OCI-LY7 (cell line): ENCODE measurements at regions of chr9 and their contacts with region 1.

Region 1: DNA sequence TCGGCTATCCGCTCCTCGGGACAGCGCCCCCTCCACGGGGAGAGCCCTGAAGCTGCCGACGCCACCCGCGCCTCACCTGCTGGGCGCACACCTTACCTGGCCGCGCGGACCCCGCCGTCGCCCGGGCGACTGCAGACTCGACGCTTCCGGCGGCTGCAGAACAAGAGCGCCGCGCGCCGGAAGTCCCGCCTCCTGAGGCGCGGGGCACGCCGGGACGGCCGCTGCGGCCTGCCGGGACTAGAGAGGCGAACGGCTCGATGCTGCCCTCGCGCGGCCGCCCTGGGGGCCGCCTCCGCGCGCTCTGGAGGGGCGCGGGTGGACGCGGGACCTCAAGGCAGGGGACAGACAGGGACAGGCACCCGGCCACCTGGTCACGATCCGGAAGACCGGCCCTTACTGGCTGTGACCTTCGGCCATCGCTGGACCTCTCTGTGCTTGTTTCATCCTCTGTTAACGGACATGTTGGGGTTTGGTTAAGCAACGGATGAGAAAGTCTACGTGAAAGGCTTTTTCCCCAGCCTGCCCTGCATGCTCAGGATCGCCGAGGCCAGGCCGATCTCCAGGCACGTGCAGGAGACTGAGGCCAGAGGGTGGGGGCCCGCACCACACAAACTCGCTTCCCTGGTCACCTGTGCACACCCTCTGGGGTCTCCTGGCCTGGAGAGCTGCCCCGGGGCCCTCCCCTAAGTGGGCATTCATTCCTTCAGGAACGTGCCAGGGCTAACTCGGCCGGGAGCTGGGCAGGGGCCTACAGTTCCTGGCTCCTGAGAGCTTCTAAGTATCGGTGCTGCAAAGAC is at the start of gene SNAPC4:
- DNase-seq: peak; percentile 93
- H3K4me3 ChIP-seq: peak within 1 kb of the TSS; percentile 99
- H3K27ac ChIP-seq: peak within 1 kb of the TSS; percentile 4
- H3K4me1 ChIP-seq: peaks cover 20% of the 10 kb centered on the region
- CTCF ChIP-seq: peak; percentile 85
- total RNA-seq, gene SNAPC4: 10.2 and 13.4 TPM in 2 replicates

Region 2: DNA sequence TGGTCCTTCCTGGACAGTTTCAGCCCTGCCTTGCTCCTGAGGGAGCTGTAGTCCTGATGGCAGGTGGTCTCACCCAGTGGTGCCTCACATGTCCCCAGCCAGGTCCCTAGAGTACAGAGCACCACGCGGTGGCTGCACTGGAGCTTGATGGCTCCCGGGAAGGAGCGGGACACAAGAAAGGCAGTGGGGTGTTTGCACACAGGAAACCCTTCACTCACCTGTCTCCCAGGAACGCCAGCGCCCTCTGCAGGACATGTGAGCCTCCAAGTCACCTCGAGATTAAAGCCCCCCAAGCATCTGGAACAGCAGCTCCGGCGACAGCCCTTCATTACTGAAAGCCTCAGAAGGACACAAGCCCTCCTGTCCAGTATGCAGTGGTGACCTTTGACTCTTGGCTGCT is 261.7 kb before region 1 on chr9:
- CTCF ChIA-PET with region 1: no interaction called
- POLR2A ChIA-PET with region 1: no interaction called
- intact Hi-C with region 1: no loop called
- DNase-seq: peak; percentile 74
- H3K4me3 ChIP-seq: no peak overlapping the region
- H3K27ac ChIP-seq: no peak overlapping the region
- H3K4me1 ChIP-seq: no peaks in the 10 kb centered on the region
- CTCF ChIP-seq: peak; percentile 79

Region 3: GRCh38 chr9:136312436-136312835 is 87.8 kb before region 1 on chr9:
- CTCF ChIA-PET with region 1: no interaction called
- POLR2A ChIA-PET with region 1: no interaction called
- intact Hi-C with region 1: loop called (anchors 1 kb)
- DNase-seq: peak; percentile 45
- H3K4me3 ChIP-seq: no peak overlapping the region
- H3K27ac ChIP-seq: no peak overlapping the region
- H3K4me1 ChIP-seq: no peaks in the 10 kb centered on the region
- CTCF ChIP-seq: peak; percentile 67

Region 4: GRCh38 chr9:136339173-136339957 is 60.9 kb before region 1 on chr9:
- CTCF ChIA-PET with region 1: interaction called, 3 read pairs
- POLR2A ChIA-PET with region 1: no interaction called
- intact Hi-C with region 1: loop called (anchors 1 kb)
- DNase-seq: peak; percentile 73
- H3K4me3 ChIP-seq: no peak overlapping the region
- H3K27ac ChIP-seq: no peak overlapping the region
- H3K4me1 ChIP-seq: no peaks in the 10 kb centered on the region
- CTCF ChIP-seq: peak; percentile 98

Region 5: GRCh38 chr9:136363606-136364370 is 36.4 kb before region 1 on chr9 and contains the start of gene DNLZ:
- CTCF ChIA-PET with region 1: no interaction called
- POLR2A ChIA-PET with region 1: no interaction called
- intact Hi-C with region 1: loop called (anchors 1 kb)
- DNase-seq: peak; percentile 91
- H3K4me3 ChIP-seq: peak within 1 kb of the TSS; percentile 82
- H3K27ac ChIP-seq: peak within 1 kb of the TSS; percentile 72
- H3K4me1 ChIP-seq: peaks cover 12% of the 10 kb centered on the region
- CTCF ChIP-seq: peak; percentile 84
- total RNA-seq, gene DNLZ: 21.2 and 21.8 TPM in 2 replicates

Region 6: DNA sequence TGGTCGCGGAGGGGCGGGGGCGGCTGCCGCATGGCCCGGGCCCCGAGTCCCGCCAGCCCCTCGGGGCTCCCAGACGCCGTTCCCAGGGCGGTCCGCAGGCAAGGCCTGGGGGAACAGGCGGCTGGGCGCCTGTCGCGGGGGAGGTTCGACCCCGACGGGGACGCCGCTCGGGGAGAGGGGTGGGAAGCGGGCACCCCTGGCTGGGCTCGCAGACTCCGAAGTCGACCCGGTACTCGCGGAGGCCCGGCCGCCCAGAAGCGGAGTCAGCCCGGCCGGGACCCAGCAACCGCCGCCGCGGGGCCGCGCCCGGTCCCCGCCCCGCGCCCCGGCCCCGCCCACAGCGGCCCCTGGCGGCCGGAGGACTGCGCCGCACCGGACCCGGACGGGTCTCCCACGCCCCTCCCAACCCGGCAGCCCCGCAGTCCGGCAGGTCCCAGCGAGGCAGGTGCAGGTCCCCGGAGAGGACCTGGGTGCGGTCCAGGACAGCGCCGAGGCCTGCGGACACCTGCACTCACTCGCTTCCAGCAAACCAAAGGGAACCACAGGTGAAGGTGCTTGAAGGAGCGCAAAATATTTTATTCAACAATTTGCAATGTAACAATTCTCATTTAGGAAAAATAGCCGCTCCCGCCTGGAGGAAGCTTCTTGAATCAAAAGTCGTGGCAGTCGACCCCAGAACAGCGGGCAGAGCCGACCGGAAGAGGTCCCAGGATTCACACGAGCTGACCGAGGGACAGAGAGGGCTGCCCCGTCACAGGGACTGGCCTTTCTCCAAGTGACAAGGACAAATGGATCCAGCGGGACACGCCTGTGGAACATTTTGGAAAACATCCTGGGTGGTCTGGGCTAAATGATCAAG is 39.5 kb after region 1 on chr9 and contains the start of gene INPP5E:
- CTCF ChIA-PET with region 1: no interaction called
- POLR2A ChIA-PET with region 1: no interaction called
- intact Hi-C with region 1: loop called (anchors 1 kb)
- DNase-seq: peak; percentile 83
- H3K4me3 ChIP-seq: peak within 1 kb of the TSS; percentile 87
- H3K27ac ChIP-seq: peak within 1 kb of the TSS; percentile 49
- H3K4me1 ChIP-seq: peaks cover 23% of the 10 kb centered on the region
- CTCF ChIP-seq: peak; percentile 65
- total RNA-seq, gene INPP5E: 16.7 and 20.2 TPM in 2 replicates